ENCODE measurements at regions of chr9 and their contacts with region 1.

Region 1: DNA sequence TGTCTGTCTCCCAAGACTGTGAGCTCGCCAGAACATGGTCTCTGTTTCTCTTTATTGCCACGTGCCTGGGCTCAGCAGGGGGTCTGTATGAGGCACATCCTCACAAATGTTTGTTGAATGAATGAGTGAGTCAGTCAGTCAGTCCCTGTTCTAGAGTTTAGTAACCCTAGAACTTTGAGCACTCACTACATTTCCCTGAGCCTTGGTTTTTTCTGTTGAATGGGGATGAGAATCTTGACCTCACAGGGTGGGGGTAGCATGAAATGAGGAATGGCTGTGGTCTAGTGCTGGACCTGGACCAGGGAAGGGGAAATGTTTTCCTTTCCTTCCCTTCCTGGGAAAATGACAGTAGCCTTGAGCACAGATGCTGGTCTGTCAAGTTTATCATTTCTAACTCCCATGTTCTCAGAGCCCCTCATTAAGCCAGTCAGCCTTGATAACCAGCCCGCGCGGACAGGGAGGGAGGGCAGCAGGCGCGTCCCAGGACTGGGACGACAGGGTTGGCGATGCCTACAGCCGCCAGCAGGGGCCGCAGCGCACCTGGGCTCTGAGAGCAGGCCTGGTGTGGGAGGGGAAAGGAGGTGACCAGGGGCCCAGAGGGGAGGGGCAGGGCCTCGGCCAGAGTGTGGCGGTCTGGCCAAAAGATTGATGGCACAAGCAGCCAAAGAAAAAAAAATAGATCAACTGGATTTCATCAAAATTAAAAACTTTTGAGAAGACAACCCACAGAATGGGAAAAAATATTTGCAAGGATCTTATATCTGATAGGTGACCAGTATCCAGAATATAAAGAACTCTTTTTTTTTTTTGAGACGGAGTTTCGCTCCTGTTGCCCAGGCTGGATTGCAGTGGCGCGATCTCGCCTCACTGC is 24.1 kb upstream of the WNK2 start:
- DNase-seq: peak; percentile 90
- H3K4me3 ChIP-seq: no peak overlapping the region
- H3K27ac ChIP-seq: no peak overlapping the region
- H3K4me1 ChIP-seq: no peaks in the 10 kb centered on the region
- H3K27me3 ChIP-seq: no peaks in the 10 kb centered on the region
- CTCF ChIP-seq: peak; percentile 87 to 95 (median 87)
- POLR2A ChIP-seq: no peak

Region 2: GRCh38 chr9:93302551-93303257 is 142.9 kb after region 1 on chr9:
- intact Hi-C with region 1: loop called (anchors 5 kb)
- DNase-seq: peak; percentile 71
- H3K4me3 ChIP-seq: no peak overlapping the region
- H3K27ac ChIP-seq: peak overlapping the region in 1 of 2 donors; percentile 39
- H3K4me1 ChIP-seq: peaks cover 60% of the 10 kb centered on the region
- H3K27me3 ChIP-seq: no peaks in the 10 kb centered on the region
- CTCF ChIP-seq: peak; percentile 26 to 44 (median 28)
- POLR2A ChIP-seq: no peak

Measured in testis (tissue), 5 donors.